Transverse colon (tissue), 4 donors: ENCODE measurements at regions of chr1 and their contacts with region 1.

Region 1: DNA sequence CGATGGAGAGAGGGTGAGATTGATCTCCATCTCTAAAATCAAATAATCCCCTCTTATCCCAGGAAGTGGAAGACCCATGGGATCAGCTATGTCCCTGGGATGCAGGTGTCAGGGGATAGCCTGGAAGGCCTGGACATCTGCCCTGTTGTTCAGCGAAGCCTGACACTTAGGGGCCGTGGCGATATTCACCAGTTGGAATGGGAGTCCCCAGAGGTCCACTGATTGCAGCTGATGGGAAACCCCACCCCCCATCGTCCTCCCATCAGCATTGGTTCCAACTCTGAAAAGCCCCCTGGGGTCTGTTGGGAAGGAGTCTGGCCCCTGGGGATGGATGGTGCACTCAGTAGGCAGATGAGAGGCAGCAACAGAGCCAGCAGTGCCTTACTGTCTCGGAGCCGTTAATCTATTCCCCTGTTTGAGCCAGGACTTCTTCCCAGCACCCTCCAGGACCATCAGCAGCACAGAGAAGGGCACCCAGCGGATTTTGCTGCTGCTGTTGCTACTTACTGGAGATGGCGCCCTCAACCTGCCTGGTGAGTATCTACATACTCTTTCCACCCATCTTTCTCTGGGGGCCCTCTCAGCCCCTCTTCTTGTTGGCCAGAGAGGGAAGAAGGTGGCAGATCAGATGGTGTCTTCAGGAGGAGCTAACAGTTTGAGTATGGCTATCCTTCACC is 13.4 kb downstream of the CATSPER4 start:
- DNase-seq: no peak
- H3K4me3 ChIP-seq: no peak overlapping the region
- H3K27ac ChIP-seq: no peak overlapping the region
- H3K4me1 ChIP-seq: no peaks in the 10 kb centered on the region
- H3K27me3 ChIP-seq: no peaks in the 10 kb centered on the region
- CTCF ChIP-seq: no peak
- EP300 ChIP-seq: no peak
- POLR2A ChIP-seq: no peak

Region 2: DNA sequence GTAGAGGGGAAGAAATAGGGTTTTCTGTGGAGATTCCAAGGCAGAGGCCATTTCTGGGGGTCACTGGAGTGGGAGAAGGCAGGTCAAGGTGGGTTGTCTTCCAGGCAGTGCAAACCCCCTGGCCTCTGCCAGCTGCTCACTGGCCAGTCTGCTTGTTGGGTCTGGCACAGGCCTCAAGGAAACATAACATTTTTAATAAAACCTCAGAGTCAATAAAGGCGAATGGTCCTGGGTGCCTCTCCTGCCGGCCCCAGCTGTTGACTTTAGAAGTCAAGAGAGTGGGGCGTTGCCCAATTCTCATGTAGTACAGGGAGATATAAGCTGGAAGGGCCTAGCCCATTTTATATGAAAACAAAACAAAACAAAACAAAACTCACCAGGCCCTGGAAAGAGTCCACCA is 1310.3 kb before region 1 on chr1:
- in situ Hi-C with region 1: no loop called
- intact Hi-C with region 1: loop called (anchors 5 kb)
- DNase-seq: peak; percentile 78
- H3K4me3 ChIP-seq: no peak overlapping the region
- H3K27ac ChIP-seq: peak overlapping the region; percentile 47 to 82 (median 74)
- H3K4me1 ChIP-seq: peaks cover 0 to 54% (median 16%) of the 10 kb centered on the region in 4 donors
- H3K27me3 ChIP-seq: no peaks in the 10 kb centered on the region
- CTCF ChIP-seq: no peak
- EP300 ChIP-seq: no peak
- POLR2A ChIP-seq: no peak